ENCODE measurements at regions of chr4 and their contacts with region 1.

Region 1: DNA sequence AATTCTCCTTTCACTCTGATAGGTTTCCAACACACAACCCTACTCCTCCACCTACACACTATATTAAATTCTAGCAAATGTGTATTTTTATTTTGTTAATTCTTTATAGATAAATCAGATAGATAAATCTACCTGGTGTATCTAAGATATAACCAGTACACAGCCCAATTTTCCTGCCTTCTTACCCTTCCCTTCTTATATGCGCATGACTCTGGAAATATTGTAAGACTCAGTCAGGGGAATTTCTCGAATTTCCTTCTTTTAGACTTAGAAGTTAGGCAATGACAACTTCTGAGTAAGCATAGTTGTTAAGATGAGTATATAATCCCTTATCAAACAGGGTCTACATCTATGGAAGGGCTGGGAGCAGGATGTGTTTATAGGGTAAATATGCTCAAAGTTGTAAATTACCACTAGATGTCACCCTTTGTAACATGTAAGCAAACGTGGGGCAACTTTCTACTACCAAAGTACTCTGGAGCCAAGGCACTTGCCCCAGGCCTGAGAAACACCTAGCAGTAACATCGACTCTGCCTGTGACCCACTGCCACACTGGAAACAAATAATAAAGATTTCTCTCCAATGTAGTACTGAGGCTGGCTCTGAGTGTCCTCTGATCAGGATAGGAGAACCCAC is 444.7 kb downstream of the IQCM start:
- DNase-seq: peak; percentile 25 to 54
- ATAC-seq: peak; percentile 84 to 89; a peak in 4 of 6 replicates
- H3K4me3 ChIP-seq: no peak overlapping the region
- H3K27ac ChIP-seq: no peak overlapping the region
- H3K4me1 ChIP-seq: no peaks in the 10 kb centered on the region
- CTCF ChIP-seq: peak; percentile 44
- EP300 ChIP-seq: no peak
- POLR2A ChIP-seq: no peak
- RAD21 ChIP-seq: peak; percentile 62 to 64

Region 2: DNA sequence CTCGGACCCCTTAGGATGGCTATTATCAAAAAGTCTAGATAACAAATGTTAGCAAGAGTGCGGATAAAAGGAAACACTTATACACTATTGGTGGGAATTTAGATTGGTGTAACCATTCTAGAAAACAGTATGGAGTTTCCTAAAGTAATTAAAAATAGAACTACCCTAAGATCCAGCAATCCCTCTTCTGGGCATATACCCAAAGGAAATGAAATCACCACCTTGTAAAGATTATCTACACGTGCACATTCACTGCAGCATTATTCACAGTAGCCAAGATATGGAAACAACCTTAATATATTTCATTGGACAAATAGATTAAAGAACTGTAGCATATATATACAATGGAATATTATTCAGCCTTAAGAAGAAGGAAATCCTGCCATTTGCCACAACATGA is 17.7 kb before region 1 on chr4:
- CTCF ChIA-PET with region 1: no interaction called
- POLR2A ChIA-PET with region 1: no interaction called
- DNase-seq: no peak
- ATAC-seq: no peak
- H3K4me3 ChIP-seq: no peak overlapping the region
- H3K27ac ChIP-seq: no peak overlapping the region
- H3K4me1 ChIP-seq: no peaks in the 10 kb centered on the region
- CTCF ChIP-seq: no peak
- EP300 ChIP-seq: no peak
- POLR2A ChIP-seq: no peak
- RAD21 ChIP-seq: no peak

Region 3: DNA sequence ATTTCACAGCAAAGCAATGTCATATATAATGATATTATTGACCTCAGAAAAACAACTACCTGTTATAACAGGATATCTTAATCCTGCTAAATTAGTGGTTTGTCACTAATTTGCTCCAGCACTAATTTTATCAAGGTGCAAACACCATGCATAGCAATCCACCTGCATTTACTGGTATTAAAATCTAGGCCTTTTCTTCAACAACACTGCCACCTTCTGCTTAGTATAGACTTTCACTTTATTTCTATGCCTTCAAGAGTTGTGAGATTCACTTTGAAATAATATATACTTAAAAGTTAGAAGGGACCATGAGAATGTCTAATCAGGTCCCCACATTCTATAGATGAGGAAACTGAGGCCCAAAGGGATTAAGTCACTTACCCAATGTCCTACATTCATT is 526.9 kb after region 1 on chr4:
- CTCF ChIA-PET with region 1: interaction called, 14 read pairs
- POLR2A ChIA-PET with region 1: no interaction called
- DNase-seq: peak in 1 of 2 experiments; percentile 12
- ATAC-seq: peak; percentile 62 to 69; a peak in 3 of 6 replicates
- H3K4me3 ChIP-seq: no peak overlapping the region
- H3K27ac ChIP-seq: no peak overlapping the region
- H3K4me1 ChIP-seq: no peaks in the 10 kb centered on the region
- CTCF ChIP-seq: peak; percentile 62
- EP300 ChIP-seq: no peak
- POLR2A ChIP-seq: no peak
- RAD21 ChIP-seq: peak; percentile 71 to 72

Measured in A549 (cell line).